Activated CD8-positive, alpha-beta T cell treated with anti-CD3 and anti-CD28 coated beads, Interleukin-2, amount 10 ng/mL, durations not matched to agents 7 days and 5 days (primary cell): ENCODE measurements at regions of chr7 and their contacts with region 1.

Region 1: DNA sequence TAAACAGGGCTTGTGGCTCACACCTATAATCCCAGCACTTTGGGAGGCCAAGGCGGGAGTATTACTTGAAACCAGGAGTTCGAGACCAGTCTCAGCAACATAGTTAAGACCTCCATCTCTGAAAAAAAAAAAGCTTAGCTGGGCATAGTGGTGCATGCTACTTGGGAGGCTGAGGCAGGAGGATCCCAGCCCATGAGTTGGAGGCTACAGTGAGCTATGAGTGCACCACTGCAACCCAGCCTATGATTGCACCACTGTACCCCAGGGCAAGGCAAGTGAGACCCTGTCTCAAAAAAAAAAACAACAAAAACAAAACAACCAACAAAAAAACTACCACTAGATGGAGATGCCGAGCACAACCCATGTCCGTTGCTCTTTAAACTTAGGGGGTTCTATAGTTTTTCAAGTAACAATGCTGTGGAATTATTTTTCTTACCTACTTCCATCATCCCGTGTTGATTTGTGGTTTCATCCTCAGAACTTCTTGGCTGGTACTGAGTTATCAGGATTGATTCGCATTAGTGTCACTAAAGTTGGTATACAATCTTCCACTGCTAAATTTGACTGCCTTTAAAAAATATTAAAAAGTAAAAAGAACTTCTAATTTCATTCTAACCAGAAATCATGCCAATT is 12.2 kb upstream of the REPIN1 start:
- DNase-seq: peak; percentile 45
- ATAC-seq: no peak
- H3K4me3 Mint-ChIP-seq: no peak overlapping the region
- H3K27ac Mint-ChIP-seq: peak overlapping the region; percentile 25
- H3K4me1 Mint-ChIP-seq: peaks cover 41% of the 10 kb centered on the region
- H3K27me3 Mint-ChIP-seq: peaks cover 7% of the 10 kb centered on the region

Region 2: GRCh38 chr7:150368096-150368883 is 11.9 kb after region 1 on chr7 and contains the start of gene REPIN1:
- CTCF ChIA-PET with region 1: interaction called, 31 read pairs
- POLR2A ChIA-PET with region 1: interaction called, 6 read pairs
- DNase-seq: peak; percentile 83
- ATAC-seq: peak; percentile 73
- H3K4me3 Mint-ChIP-seq: peak within 1 kb of the TSS; percentile 96
- H3K27ac Mint-ChIP-seq: peak within 1 kb of the TSS; percentile 91
- H3K4me1 Mint-ChIP-seq: peaks cover 46% of the 10 kb centered on the region
- H3K27me3 Mint-ChIP-seq: no peaks in the 10 kb centered on the region
- total RNA-seq, gene REPIN1: 40.9 to 43.1 TPM

Region 3: GRCh38 chr7:150378853-150379440 is 22.6 kb after region 1 on chr7 and contains the start of gene ZNF775:
- CTCF ChIA-PET with region 1: interaction called, 16 read pairs
- POLR2A ChIA-PET with region 1: interaction called, 5 read pairs
- DNase-seq: peak; percentile 94
- ATAC-seq: peak; percentile 99
- H3K4me3 Mint-ChIP-seq: peak within 1 kb of the TSS; percentile 86
- H3K27ac Mint-ChIP-seq: peak within 1 kb of the TSS; percentile 72
- H3K4me1 Mint-ChIP-seq: peaks cover 40% of the 10 kb centered on the region
- H3K27me3 Mint-ChIP-seq: no peaks in the 10 kb centered on the region
- total RNA-seq, gene ZNF775: 6.7 to 7.7 TPM

Region 4: GRCh38 chr7:150393325-150393724 is 36.9 kb after region 1 on chr7:
- CTCF ChIA-PET with region 1: no interaction called
- POLR2A ChIA-PET with region 1: no interaction called
- DNase-seq: no peak
- ATAC-seq: no peak
- H3K4me3 Mint-ChIP-seq: no peak overlapping the region
- H3K27ac Mint-ChIP-seq: no peak overlapping the region
- H3K4me1 Mint-ChIP-seq: no peaks in the 10 kb centered on the region
- H3K27me3 Mint-ChIP-seq: no peaks in the 10 kb centered on the region

Region 5: DNA sequence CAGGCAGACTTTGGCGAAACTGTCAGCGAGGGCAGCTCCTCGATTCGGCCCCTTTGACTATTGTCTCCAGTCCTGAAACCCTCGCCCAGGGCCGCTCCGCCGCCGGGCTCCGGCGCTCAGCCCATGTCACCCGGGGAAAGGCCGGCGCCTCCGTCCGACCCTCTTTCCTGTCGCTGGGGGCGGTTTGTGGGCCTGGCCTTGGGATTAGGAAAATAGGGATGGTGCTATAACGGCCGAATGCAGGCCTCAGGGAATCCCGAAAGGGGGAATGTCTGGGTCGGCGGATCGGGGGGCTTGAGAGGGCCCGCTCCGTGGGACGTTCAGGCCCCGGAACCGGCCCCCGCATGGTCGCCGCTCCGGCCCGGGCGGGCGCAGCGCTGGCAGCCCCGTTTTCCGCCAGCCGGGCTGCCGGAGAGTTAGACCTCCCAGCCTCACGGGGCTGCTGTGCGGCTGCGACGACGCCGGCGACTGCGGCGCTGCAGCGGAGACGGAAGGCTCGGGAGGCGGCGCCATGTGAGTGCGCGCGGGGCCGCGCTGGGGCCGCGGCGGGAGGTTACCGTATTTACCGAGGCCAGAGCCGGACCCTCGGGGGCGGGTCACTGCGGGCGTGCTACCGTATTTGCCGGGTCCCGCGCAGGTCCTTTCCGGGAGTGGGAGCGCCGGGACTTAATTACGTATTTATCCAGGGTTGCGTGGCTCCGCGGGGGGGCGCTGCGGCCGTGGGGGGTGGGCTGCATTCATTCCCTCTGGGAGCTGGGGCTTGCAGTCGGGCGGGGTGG is 48.6 kb after region 1 on chr7:
- CTCF ChIA-PET with region 1: interaction called, 36 read pairs
- POLR2A ChIA-PET with region 1: interaction called, 4 read pairs
- DNase-seq: peak; percentile 85
- ATAC-seq: peak; percentile 83
- H3K4me3 Mint-ChIP-seq: peak overlapping the region; percentile 94
- H3K27ac Mint-ChIP-seq: peak overlapping the region; percentile 97
- H3K4me1 Mint-ChIP-seq: peaks cover 49% of the 10 kb centered on the region
- H3K27me3 Mint-ChIP-seq: no peaks in the 10 kb centered on the region

Region 6: GRCh38 chr7:150420987-150421674 is 64.8 kb after region 1 on chr7:
- CTCF ChIA-PET with region 1: interaction called, 11 read pairs
- POLR2A ChIA-PET with region 1: interaction called, 4 read pairs
- DNase-seq: peak; percentile 91
- ATAC-seq: peak; percentile 100
- H3K4me3 Mint-ChIP-seq: no peak overlapping the region
- H3K27ac Mint-ChIP-seq: no peak overlapping the region
- H3K4me1 Mint-ChIP-seq: peaks cover 12% of the 10 kb centered on the region
- H3K27me3 Mint-ChIP-seq: peaks cover 4% of the 10 kb centered on the region

Region 7: GRCh38 chr7:150610233-150610632 is 253.9 kb after region 1 on chr7:
- CTCF ChIA-PET with region 1: no interaction called
- POLR2A ChIA-PET with region 1: no interaction called
- DNase-seq: no peak
- ATAC-seq: no peak
- H3K4me3 Mint-ChIP-seq: no peak overlapping the region
- H3K27ac Mint-ChIP-seq: no peak overlapping the region
- H3K4me1 Mint-ChIP-seq: peaks cover 51% of the 10 kb centered on the region
- H3K27me3 Mint-ChIP-seq: no peaks in the 10 kb centered on the region